ENCODE measurements at regions of chr20 and their contacts with region 1.

Region 1: DNA sequence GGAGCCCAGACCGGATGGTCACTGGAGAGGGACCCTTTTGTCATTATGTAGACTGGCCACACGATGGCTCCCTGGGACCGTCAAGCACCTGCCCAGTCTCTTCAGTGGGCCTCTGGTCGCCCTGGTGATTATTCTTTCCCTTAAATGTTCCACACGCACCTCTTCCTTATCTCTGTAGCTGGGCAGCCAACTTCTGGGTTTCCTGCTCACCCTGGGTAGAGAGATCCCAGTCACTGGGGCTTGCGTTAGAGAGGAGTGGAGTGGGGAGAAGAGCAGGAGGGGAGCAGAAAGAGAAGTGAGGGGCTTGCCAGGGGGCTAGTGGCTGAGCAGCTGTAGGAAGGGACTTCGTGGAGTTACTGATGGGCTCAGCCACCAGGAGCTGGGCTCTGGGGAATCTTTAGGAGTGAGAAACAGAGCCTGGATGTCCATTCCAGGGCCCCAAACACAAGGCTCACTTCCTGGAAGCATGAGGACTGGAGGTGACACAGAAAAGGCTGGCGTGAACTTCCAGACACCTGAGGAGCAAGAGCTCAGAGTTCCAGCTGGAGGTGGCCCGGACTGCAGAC is 150.1 kb downstream of the DHX35 start:
- DNase-seq: peak; percentile 80
- H3K4me3 Mint-ChIP-seq: peak overlapping the region; percentile 10
- H3K27ac Mint-ChIP-seq: peak overlapping the region; percentile 16
- H3K4me1 Mint-ChIP-seq: peaks cover 17% of the 10 kb centered on the region
- H3K27me3 Mint-ChIP-seq: peaks cover 93% of the 10 kb centered on the region
- CTCF ChIP-seq: peak; percentile 82

Region 2: GRCh38 chr20:38935285-38935684 is 177.0 kb before region 1 on chr20:
- CTCF ChIA-PET with region 1: no interaction called
- intact Hi-C with region 1: no loop called
- DNase-seq: peak; percentile 44
- H3K4me3 Mint-ChIP-seq: no peak overlapping the region
- H3K27ac Mint-ChIP-seq: peak overlapping the region; percentile 26
- H3K4me1 Mint-ChIP-seq: peaks cover 71% of the 10 kb centered on the region
- H3K27me3 Mint-ChIP-seq: no peaks in the 10 kb centered on the region
- CTCF ChIP-seq: peak; percentile 62

Region 3: GRCh38 chr20:39214828-39215227 is 102.6 kb after region 1 on chr20:
- CTCF ChIA-PET with region 1: no interaction called
- intact Hi-C with region 1: loop called (anchors 10 kb)
- DNase-seq: no peak
- H3K4me3 Mint-ChIP-seq: no peak overlapping the region
- H3K27ac Mint-ChIP-seq: no peak overlapping the region
- H3K4me1 Mint-ChIP-seq: no peaks in the 10 kb centered on the region
- H3K27me3 Mint-ChIP-seq: peaks cover 81% of the 10 kb centered on the region
- CTCF ChIP-seq: no peak

Region 4: DNA sequence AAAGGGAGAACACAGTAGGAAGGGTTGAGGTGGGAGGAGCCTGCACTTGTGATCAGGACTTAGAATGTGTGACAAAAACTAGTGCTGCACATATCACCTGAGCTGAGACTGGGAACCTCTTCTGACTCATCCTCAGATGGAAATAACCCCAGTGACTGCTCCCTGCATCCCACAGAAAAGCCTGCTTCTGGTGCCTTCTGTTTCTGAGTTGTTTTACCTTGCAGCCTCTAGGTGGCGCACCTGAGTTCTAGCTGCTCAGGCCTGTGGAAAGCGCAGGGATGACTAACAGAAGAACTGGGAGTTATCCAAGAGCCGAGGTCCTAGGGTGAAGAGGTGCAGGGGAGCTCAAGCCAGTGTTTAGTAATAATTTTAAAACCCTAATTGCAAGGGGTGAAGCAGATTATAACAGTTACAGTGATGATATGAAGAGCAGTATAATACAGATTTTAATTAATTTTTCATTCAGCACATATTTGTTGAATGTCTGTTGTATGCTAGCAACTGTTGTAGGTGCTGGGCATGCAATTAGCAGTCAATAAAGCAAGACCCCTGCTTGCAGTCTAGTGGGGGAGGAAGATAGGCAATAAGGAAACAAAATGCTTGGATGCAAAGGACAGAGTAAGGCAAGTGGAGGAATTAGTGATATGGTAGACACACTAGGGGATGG is 152.4 kb after region 1 on chr20:
- CTCF ChIA-PET with region 1: interaction called, 9 read pairs
- intact Hi-C with region 1: loop called (anchors 1 kb)
- DNase-seq: peak; percentile 81
- H3K4me3 Mint-ChIP-seq: no peak overlapping the region
- H3K27ac Mint-ChIP-seq: no peak overlapping the region
- H3K4me1 Mint-ChIP-seq: no peaks in the 10 kb centered on the region
- H3K27me3 Mint-ChIP-seq: peaks cover 75% of the 10 kb centered on the region
- CTCF ChIP-seq: peak; percentile 98

Region 5: GRCh38 chr20:39429716-39430115 is 317.5 kb after region 1 on chr20:
- CTCF ChIA-PET with region 1: interaction called, 3 read pairs
- intact Hi-C with region 1: loop called (anchors 5 kb)
- DNase-seq: no peak
- H3K4me3 Mint-ChIP-seq: no peak overlapping the region
- H3K27ac Mint-ChIP-seq: no peak overlapping the region
- H3K4me1 Mint-ChIP-seq: no peaks in the 10 kb centered on the region
- H3K27me3 Mint-ChIP-seq: no peaks in the 10 kb centered on the region
- CTCF ChIP-seq: no peak

Region 6: DNA sequence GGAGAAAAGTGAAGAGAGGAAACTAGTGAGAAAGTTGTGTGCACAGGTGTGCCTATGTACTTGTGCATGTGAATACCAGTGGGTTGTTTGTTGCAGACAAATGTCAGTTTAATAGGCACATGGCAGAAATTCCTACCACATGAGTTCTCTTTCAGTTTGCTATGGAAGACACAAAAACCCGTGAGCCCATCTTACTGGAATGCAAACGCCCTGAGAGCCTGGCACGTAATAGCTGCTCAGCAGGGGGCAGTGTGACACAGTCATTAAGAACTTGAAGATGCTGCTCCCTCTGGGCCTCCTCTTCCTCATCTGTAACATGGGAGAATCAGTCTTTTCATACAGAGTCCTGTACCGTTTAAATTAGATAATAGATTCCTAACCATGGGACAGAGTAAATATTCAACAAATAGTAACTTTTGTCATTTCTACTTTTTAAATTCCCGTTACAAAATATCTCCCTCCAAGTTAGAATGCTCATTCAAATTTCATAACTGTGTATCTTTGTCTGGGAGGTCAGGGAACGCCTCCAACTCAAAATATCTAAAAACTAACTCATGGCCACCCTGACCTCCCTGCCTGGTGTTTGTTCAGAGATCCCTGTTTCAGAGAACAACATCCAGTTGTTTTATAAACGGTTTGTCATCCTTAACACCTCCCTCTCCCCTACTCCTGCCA is 773.9 kb after region 1 on chr20:
- CTCF ChIA-PET with region 1: no interaction called
- intact Hi-C with region 1: loop called (anchors 10 kb)
- DNase-seq: peak; percentile 16
- H3K4me3 Mint-ChIP-seq: no peak overlapping the region
- H3K27ac Mint-ChIP-seq: no peak overlapping the region
- H3K4me1 Mint-ChIP-seq: no peaks in the 10 kb centered on the region
- H3K27me3 Mint-ChIP-seq: no peaks in the 10 kb centered on the region
- CTCF ChIP-seq: peak; percentile 13

Region 7: GRCh38 chr20:40265825-40266533 is 1153.7 kb after region 1 on chr20:
- CTCF ChIA-PET with region 1: interaction called, 4 read pairs
- intact Hi-C with region 1: loop called (anchors 5 kb)
- DNase-seq: peak; percentile 49
- H3K4me3 Mint-ChIP-seq: no peak overlapping the region
- H3K27ac Mint-ChIP-seq: no peak overlapping the region
- H3K4me1 Mint-ChIP-seq: no peaks in the 10 kb centered on the region
- H3K27me3 Mint-ChIP-seq: peaks cover 56% of the 10 kb centered on the region
- CTCF ChIP-seq: peak; percentile 47

Region 8: DNA sequence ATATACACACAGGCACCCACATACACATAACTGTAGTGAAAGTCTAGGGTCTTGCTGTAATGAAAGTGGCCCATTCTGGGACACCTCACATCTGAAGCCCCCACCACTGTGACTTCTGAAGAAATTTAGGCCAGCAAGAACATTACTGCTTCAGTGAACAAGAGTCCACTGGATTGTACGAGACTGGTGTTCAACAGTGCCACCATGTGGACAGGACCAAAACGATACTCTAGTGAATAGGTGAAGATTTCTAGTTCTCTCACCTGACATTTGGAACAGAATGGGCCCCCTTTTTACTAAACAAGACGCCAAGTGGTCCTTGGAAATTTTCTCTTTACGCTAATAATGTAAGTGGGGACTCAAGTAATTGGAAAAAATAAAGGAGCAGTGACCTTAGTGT is 1419.8 kb after region 1 on chr20:
- CTCF ChIA-PET with region 1: interaction called, 11 read pairs
- intact Hi-C with region 1: no loop called
- DNase-seq: peak; percentile 56
- H3K4me3 Mint-ChIP-seq: no peak overlapping the region
- H3K27ac Mint-ChIP-seq: no peak overlapping the region
- H3K4me1 Mint-ChIP-seq: no peaks in the 10 kb centered on the region
- H3K27me3 Mint-ChIP-seq: peaks cover 49% of the 10 kb centered on the region
- CTCF ChIP-seq: peak; percentile 49

Measured in Calu3 (cell line).